ENCODE measurements at regions of chr16 and their contacts with region 1.

Region 1: GRCh38 chr16:50024684-50025536 is at the start of gene CNEP1R1:
- DNase-seq: peak; percentile 97 to 99 (median 99)
- ATAC-seq: peak; percentile 98
- H3K4me3 ChIP-seq: peak within 1 kb of the TSS; percentile 92
- H3K27ac ChIP-seq: peak within 1 kb of the TSS; percentile 70
- H3K4me1 ChIP-seq: peaks cover 0 to 9% of the 10 kb centered on the region in 2 experiments; a peak in 3 of 5 replicates
- H3K27me3 ChIP-seq: no peaks in the 10 kb centered on the region
- CTCF ChIP-seq: peak; percentile 97 to 100 (median 99)
- EP300 ChIP-seq: peak; percentile 55
- POLR2A ChIP-seq: peak; percentile 69
- RAD21 ChIP-seq: peak; percentile 97 to 98
- polyA plus RNA-seq, gene CNEP1R1: 9.7 to 10.8 TPM

Region 2: DNA sequence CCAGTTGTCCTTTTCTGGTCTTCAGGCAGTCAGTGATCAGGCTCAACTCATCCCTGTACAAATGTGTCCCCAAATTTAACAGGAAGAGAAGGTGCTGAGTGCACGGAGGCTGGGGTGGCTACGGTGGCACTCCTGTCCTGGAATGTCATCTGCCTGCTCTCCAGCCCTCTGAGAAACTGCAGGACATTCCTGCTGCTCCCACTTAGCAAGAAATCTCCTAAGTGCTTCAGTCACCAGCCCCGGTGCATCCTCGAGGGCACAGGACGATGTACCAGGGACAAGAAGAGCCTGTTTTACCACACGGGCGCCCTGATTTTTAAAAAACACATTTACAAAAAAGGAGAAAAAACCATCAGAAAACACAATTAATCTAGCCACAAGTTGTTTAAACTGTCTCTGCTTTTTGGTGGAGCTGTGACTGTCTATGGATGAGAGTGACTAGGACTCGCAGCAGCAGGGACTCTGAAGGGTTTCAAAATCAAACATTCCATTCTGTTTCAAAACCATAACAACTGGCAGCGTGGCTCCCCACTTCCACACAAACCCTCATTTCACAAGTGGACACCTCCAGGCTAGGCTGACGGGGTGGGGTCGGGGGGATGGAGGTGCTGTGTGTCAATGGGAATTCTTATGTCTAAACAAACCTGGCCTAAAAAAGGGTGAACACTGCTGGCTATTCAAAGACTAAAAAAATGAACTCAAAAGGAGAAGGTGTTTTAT is 65.2 kb before region 1 on chr16:
- CTCF ChIA-PET with region 1: no interaction called
- POLR2A ChIA-PET with region 1: interaction called, 6 read pairs
- in situ Hi-C with region 1: no loop called
- intact Hi-C with region 1: loop called (anchors 2 kb)
- DNase-seq: no peak
- ATAC-seq: no peak
- H3K4me3 ChIP-seq: no peak overlapping the region
- H3K27ac ChIP-seq: no peak overlapping the region
- H3K4me1 ChIP-seq: no peaks in the 10 kb centered on the region; a peak in 1 of 5 replicates
- H3K27me3 ChIP-seq: peaks cover 8 to 52% of the 10 kb centered on the region in 2 experiments
- CTCF ChIP-seq: no peak
- EP300 ChIP-seq: no peak
- POLR2A ChIP-seq: no peak
- RAD21 ChIP-seq: no peak

Region 3: DNA sequence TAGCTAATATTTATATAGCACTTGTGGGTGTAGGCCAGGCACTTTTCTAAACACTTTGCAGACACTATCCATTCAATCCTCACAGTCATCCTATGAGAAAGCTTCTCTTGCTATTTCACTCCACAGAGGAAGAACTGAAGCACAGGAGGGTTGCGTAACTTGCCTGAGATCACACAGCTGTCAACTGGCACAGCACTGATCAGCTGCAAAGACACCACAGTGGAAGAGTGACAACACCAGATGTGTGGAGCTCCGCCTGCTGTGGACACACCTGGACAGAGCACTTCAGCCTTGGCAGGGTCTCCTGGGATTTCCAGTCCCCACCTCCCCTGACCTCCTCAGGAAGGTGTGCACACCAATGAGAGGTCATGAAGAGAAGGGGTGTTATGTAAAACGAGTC is 13.2 kb before region 1 on chr16:
- CTCF ChIA-PET with region 1: no interaction called
- POLR2A ChIA-PET with region 1: no interaction called
- in situ Hi-C with region 1: no loop called
- intact Hi-C with region 1: no loop called
- DNase-seq: no peak
- ATAC-seq: no peak
- H3K4me3 ChIP-seq: no peak overlapping the region
- H3K27ac ChIP-seq: no peak overlapping the region
- H3K4me1 ChIP-seq: no peaks in the 10 kb centered on the region
- H3K27me3 ChIP-seq: peaks cover 8 to 14% of the 10 kb centered on the region in 2 experiments; a peak in 4 of 5 replicates
- CTCF ChIP-seq: no peak
- EP300 ChIP-seq: no peak
- POLR2A ChIP-seq: no peak
- RAD21 ChIP-seq: no peak

Region 4: DNA sequence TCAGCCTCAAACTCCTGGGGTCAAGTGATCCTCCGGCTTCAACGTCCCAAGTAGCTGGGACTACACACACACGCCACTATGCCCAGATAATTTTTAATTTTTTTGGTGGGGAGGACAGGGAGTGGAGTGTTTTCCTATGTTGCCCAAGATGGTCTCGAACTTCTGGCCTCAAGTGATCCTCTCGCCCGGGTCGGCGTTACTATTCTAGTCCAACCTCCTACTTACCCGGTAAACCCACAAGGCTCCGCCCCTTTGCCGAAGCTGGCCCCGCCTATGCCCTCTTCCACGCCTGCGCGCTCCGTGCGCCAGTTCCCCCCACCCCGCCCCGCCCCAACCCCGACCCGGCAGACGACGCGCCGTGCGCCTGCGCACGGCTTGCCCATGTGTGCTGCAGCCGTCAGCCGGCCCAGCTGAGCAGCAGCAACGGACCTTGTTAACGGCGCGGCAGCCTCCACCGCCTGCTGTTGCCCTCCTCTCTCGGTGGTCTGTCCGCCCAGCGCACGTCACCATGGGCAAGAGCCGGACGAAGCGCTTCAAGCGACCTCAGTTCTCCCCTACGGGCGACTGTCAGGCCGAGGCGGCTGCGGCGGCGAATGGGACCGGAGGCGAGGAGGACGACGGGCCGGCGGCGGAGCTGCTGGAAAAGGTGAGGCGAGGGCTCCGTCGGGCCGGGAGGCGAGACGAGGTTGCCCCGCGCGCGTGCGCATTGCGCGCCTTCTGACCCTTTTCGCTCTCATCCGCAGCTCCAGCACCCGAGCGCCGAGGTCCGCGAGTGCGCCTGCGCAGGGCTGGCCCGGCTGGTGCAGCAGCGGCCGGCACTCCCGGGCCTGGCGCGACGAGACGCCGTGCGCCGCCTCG is 40.9 kb after region 1 on chr16 and contains the start of gene HEATR3:
- CTCF ChIA-PET with region 1: no interaction called
- POLR2A ChIA-PET with region 1: interaction called, 3 read pairs
- in situ Hi-C with region 1: no loop called
- intact Hi-C with region 1: loop called (anchors 5 kb)
- DNase-seq: peak; percentile 95 to 97 (median 96)
- ATAC-seq: peak; percentile 94
- H3K4me3 ChIP-seq: peak within 1 kb of the TSS; percentile 89
- H3K27ac ChIP-seq: peak within 1 kb of the TSS; percentile 79
- H3K4me1 ChIP-seq: peaks cover 16 to 25% of the 10 kb centered on the region in 2 experiments; a peak in 4 of 5 replicates
- H3K27me3 ChIP-seq: no peaks in the 10 kb centered on the region
- CTCF ChIP-seq: no peak
- EP300 ChIP-seq: no peak
- POLR2A ChIP-seq: peak; percentile 81
- RAD21 ChIP-seq: no peak
- polyA plus RNA-seq, gene HEATR3: 1.7 to 3.7 TPM

Region 5: DNA sequence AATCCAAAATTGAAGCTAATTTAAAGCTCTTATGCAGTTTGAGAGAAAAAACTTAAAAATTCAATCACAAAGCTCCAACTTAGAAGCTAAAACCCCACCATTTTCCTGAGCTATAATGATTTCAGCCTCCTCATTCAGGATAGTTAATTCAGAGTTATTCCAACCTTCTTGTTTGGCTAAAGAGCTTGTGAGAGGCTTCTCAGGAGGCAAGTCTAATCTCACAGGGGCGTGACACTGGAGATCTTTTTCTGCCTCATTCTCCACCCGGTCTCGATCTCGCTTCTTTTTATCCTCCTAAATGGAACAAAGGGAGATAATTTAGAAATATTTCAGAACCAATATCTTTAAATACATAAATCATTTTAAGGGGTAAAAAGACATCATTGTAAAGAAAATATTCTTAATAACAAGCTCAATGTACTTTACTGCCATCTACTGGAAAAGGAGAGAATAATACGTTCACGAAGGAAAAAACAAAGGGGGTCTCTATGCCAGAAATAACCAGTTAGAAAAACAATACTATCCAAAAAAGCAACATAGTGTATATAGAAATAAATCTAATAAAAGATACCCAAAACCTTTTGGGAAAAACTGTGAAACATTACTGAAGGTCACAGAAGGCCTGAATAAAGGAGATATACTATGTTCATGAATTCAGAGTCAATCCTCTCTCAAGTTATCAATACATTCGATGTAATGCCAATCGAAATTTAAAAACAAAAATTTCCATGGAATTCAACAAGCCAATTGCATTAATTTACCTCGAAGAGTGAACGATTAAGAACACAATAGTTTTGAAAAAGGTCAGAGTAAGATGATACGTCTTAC is 329.9 kb after region 1 on chr16:
- CTCF ChIA-PET with region 1: interaction called, 3 read pairs
- POLR2A ChIA-PET with region 1: interaction called, 3 read pairs
- in situ Hi-C with region 1: loop called (anchors 10 kb)
- intact Hi-C with region 1: loop called (anchors 5 kb)
- DNase-seq: peak in 3 of 4 experiments; percentile 30 to 34 (median 34)
- ATAC-seq: no peak
- H3K4me3 ChIP-seq: no peak overlapping the region
- H3K27ac ChIP-seq: no peak overlapping the region
- H3K4me1 ChIP-seq: no peaks in the 10 kb centered on the region
- H3K27me3 ChIP-seq: no peaks in the 10 kb centered on the region
- CTCF ChIP-seq: peak in 2 of 3 experiments; percentile 32 to 67; a peak in 3 of 6 replicates
- EP300 ChIP-seq: no peak
- POLR2A ChIP-seq: no peak
- RAD21 ChIP-seq: peak; percentile 62 to 69